GM23248 (cell line): ENCODE measurements at regions of chr7 and their contacts with region 1.

Region 1: DNA sequence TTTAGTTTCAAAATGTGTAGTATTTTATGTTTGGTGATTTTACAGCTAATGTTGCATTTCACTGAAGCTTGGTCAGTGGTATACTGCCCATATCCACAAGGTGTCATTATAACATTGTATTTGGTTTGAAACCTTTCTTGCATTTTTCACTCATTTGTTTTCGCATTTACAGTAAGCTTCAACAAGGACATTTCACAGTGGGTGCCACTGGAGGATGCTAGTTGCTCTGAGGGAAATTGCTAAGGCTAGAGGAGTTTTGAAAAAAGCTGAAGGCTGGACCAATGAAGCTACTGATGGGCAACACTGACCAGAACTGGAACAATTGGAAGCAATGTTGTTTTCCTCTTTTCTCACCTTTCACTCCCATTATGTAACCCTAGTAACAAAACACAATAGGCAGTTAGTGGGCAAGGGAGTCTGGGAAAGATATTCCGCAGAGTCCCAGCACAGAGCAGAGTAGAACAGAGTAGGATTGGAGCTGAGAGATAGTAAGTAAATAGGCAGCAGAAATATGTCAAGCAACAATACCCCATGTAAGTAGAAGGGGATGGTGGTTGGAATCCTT is 23.6 kb upstream of the SRI start:
- DNase-seq: peak; percentile 66
- H3K4me3 ChIP-seq: no peak overlapping the region
- H3K27ac ChIP-seq: no peak overlapping the region
- H3K4me1 ChIP-seq: no peaks in the 10 kb centered on the region
- H3K27me3 ChIP-seq: 0 out of 2 replicates have a peak, but pooled peaks cover 8% of the 10 kb centered on the region

Region 2: DNA sequence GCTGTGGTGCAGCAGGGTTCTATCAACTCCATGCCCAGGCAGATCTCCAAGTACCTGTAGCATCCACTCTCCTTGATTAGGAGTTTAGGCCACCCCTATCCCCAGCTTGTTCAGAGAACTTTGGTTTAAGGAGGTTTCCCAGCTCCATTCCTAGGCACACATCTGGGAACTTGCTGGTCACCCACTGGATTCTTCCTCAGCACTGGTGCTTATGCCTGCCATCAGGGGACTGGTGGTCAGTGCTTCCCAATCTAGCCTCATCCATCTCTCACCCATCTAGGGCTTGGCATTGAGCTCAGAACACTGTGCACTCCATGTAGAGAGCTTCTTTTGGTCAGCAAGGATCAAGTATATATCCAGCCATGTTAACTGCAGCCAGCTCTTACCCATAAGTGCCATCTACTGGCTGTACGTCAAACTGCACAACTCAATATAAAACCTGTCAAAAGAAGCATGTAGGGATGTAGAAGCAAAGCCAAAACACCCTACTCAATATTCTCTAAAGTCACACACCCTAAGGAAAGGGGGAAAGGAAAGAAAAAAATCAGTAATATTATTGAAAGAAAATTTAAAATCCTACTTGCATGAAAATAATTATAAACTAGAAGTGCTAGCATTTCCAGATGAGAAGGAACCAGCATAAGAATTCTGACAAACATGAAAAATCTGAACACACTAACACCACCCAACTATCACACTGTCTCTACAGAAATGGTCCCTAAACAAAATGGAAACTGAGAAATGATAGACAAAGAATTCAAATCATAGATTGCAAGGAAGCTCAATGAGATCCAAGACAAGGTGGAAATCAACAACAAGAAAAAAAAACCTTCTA is 1379.6 kb after region 1 on chr7:
- in situ Hi-C with region 1: loop called (anchors 25 kb)
- DNase-seq: peak; percentile 65
- H3K4me3 ChIP-seq: no peak overlapping the region
- H3K27ac ChIP-seq: no peak overlapping the region
- H3K4me1 ChIP-seq: no peaks in the 10 kb centered on the region
- H3K27me3 ChIP-seq: no peaks in the 10 kb centered on the region

Region 3: GRCh38 chr7:90119178-90119971 is 1875.9 kb after region 1 on chr7:
- in situ Hi-C with region 1: loop called (anchors 25 kb)
- DNase-seq: peak; percentile 44
- H3K4me3 ChIP-seq: peak overlapping the region; percentile 63
- H3K27ac ChIP-seq: no peak overlapping the region
- H3K4me1 ChIP-seq: no peaks in the 10 kb centered on the region; the same call in 1 of the 2 replicates
- H3K27me3 ChIP-seq: peaks cover 18% of the 10 kb centered on the region